CD8-positive, alpha-beta T cell (primary cell): ENCODE measurements at regions of chr12 and their contacts with region 1.

Region 1: DNA sequence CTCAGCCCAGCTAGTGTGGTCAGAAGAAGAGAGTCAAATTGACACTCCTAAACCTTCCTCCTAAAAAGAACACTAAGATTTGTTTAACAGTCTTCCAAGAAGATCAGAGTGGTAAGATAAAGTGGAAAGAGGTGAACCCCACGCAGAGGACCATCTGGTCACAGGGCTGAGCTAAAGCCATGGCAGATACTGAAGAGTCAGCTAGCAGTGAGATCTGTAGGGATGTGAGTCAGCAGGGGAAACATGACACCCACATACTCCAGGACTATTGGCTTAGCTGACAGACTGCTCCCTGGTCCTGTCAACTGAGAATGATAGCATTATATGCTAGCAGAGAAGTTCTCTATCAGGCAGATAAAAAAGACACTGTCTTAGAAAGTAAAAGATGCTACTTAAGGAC is 269.4 kb upstream of the ALG10 start:
- DNase-seq: no peak
- ATAC-seq: no peak
- H3K4me3 ChIP-seq: no peak overlapping the region
- H3K4me3 Mint-ChIP-seq: no peak overlapping the region
- H3K27ac ChIP-seq: no peak overlapping the region
- H3K27ac Mint-ChIP-seq: no peak overlapping the region
- H3K4me1 ChIP-seq: no peaks in the 10 kb centered on the region
- H3K4me1 Mint-ChIP-seq: no peaks in the 10 kb centered on the region
- H3K27me3 ChIP-seq: no peaks in the 10 kb centered on the region
- H3K27me3 Mint-ChIP-seq: no peaks in the 10 kb centered on the region
- CTCF ChIP-seq: no peak

Region 2: DNA sequence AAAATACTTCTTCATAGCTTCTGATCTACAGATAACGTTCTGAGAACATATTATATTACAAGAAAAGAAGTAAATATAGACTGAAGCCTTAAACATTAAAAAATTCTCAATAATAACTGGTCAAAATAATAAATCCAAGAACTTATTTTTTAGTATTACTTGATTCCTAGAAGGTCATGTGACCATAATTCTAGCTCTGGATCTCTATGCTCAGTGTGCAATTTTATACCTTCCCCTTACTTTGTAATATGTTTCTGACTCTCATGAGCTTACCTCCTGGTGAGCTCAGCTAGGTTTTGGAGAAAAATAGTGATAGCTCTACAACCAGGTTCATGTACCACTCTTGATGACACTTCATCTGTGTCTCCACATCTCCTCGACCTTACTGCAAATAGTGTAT is 333.1 kb before region 1 on chr12:
- CTCF ChIA-PET with region 1: no interaction called
- POLR2A ChIA-PET with region 1: no interaction called
- intact Hi-C with region 1: no loop called
- DNase-seq: no peak
- ATAC-seq: no peak
- H3K4me3 ChIP-seq: no peak overlapping the region
- H3K4me3 Mint-ChIP-seq: no peak overlapping the region
- H3K27ac ChIP-seq: no peak overlapping the region
- H3K27ac Mint-ChIP-seq: no peak overlapping the region
- H3K4me1 ChIP-seq: no peaks in the 10 kb centered on the region
- H3K4me1 Mint-ChIP-seq: no peaks in the 10 kb centered on the region
- H3K27me3 ChIP-seq: no peaks in the 10 kb centered on the region
- H3K27me3 Mint-ChIP-seq: no peaks in the 10 kb centered on the region
- CTCF ChIP-seq: no peak

Region 3: DNA sequence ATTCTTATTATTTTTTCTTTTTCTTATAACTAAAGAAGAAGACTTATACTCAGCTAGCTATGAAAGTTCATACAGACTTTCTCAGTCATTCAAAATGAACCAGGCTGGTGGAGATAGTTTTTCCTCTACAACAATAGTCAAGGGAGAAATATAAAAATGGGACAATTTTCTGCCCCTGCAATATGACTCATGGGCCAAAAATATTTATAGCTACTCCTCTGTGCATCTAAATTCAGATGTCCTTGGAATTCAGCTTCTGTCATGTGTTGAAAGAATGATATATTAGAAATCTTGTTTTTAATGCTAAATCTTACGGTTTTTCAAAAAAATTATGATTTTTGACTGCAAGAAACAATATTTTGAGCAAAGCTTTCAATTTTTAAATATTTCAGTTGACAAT is 76.0 kb before region 1 on chr12:
- CTCF ChIA-PET with region 1: no interaction called
- POLR2A ChIA-PET with region 1: no interaction called
- intact Hi-C with region 1: loop called in 1 of 2 experiments (anchors 2 kb)
- DNase-seq: no peak
- ATAC-seq: no peak
- H3K4me3 ChIP-seq: no peak overlapping the region
- H3K4me3 Mint-ChIP-seq: no peak overlapping the region
- H3K27ac ChIP-seq: no peak overlapping the region
- H3K27ac Mint-ChIP-seq: no peak overlapping the region
- H3K4me1 ChIP-seq: no peaks in the 10 kb centered on the region
- H3K4me1 Mint-ChIP-seq: no peaks in the 10 kb centered on the region
- H3K27me3 ChIP-seq: no peaks in the 10 kb centered on the region
- H3K27me3 Mint-ChIP-seq: no peaks in the 10 kb centered on the region
- CTCF ChIP-seq: no peak

Region 4: DNA sequence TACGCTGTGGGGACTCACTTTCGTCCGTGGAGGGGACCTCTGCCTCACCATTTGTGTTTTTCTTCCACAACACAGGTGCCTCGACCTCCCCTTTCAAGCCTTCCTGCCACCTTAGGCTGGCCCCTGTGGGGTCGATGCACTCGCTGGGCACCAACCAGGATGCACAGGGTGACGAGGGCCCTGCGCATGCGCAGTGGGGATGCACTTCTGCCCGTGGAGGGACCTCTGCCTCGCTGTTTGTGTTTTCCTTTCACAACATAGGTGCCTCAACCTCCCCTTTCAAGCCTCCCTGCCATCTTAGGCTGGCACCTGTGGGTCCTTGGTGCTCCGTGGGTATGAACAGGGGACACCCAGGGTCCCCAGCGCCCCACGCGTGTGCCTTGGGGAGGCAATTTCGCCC is 626.3 kb after region 1 on chr12:
- CTCF ChIA-PET with region 1: no interaction called
- POLR2A ChIA-PET with region 1: no interaction called
- intact Hi-C with region 1: no loop called
- DNase-seq: no peak
- ATAC-seq: no peak
- H3K4me3 ChIP-seq: no peak overlapping the region
- H3K4me3 Mint-ChIP-seq: no peak overlapping the region
- H3K27ac ChIP-seq: no peak overlapping the region
- H3K27ac Mint-ChIP-seq: no peak overlapping the region
- H3K4me1 ChIP-seq: no peaks in the 10 kb centered on the region
- H3K4me1 Mint-ChIP-seq: no peaks in the 10 kb centered on the region
- H3K27me3 ChIP-seq: no peaks in the 10 kb centered on the region
- H3K27me3 Mint-ChIP-seq: no peaks in the 10 kb centered on the region
- CTCF ChIP-seq: no peak